ENCODE measurements at regions of chr17 and their contacts with region 1.

Region 1: GRCh38 chr17:17021194-17021863 is 20.9 kb upstream of the MPRIP start:
- DNase-seq: peak; percentile 94 to 95
- H3K4me3 ChIP-seq: peak overlapping the region; percentile 48
- H3K27ac ChIP-seq: peak overlapping the region; percentile 98
- H3K4me1 ChIP-seq: peaks cover 88% of the 10 kb centered on the region
- H3K27me3 ChIP-seq: no peaks in the 10 kb centered on the region
- CTCF ChIP-seq: no peak

Region 2: DNA sequence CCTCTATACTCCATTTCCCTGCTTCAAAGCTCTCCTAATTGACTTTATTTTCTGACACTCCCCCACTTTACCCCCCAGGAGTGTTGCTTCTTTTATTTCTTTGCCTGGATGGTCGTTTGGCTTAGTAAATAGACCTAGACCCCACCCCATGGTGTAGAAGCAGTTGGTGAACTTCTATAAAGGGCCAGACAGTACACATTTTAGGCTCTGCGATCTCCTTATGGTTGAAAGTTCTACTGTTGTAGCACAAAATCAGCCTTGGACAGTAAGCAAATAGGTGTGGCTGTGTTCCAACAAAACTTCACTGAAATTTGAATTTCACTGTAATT is 484.2 kb before region 1 on chr17:
- CTCF ChIA-PET with region 1: no interaction called
- POLR2A ChIA-PET with region 1: interaction called, 12 read pairs
- intact Hi-C with region 1: no loop called
- DNase-seq: no peak
- H3K4me3 ChIP-seq: no peak overlapping the region; the same call in 1 of the 2 replicates
- H3K27ac ChIP-seq: no peak overlapping the region
- H3K4me1 ChIP-seq: no peaks in the 10 kb centered on the region
- H3K27me3 ChIP-seq: no peaks in the 10 kb centered on the region
- CTCF ChIP-seq: 0 out of 2 replicates have a peak, but pooled peaks have one; percentile 7

Region 3: GRCh38 chr17:17119533-17119932 is 98.2 kb after region 1 on chr17:
- CTCF ChIA-PET with region 1: no interaction called
- POLR2A ChIA-PET with region 1: interaction called, 19 read pairs
- intact Hi-C with region 1: no loop called
- DNase-seq: no peak
- H3K4me3 ChIP-seq: no peak overlapping the region
- H3K27ac ChIP-seq: peak overlapping the region; percentile 20; the same call in 1 of the 2 replicates
- H3K4me1 ChIP-seq: peaks cover 9% of the 10 kb centered on the region; the same call in 1 of the 2 replicates
- H3K27me3 ChIP-seq: no peaks in the 10 kb centered on the region
- CTCF ChIP-seq: no peak